Panc1 (cell line): ENCODE measurements at regions of chr12 and their contacts with region 1.

Region 1: GRCh38 chr12:102169922-102170621 is 27.6 kb downstream of the PMCH start:
- DNase-seq: peak; percentile 24
- ATAC-seq: peak; percentile 75; the same call in 1 of the 2 replicates
- H3K4me3 ChIP-seq: no peak overlapping the region
- H3K27ac ChIP-seq: no peak overlapping the region
- H3K4me1 ChIP-seq: no peaks in the 10 kb centered on the region
- H3K27me3 ChIP-seq: no peaks in the 10 kb centered on the region
- CTCF ChIP-seq: peak; percentile 77; the same call in 1 of the 2 replicates

Region 2: DNA sequence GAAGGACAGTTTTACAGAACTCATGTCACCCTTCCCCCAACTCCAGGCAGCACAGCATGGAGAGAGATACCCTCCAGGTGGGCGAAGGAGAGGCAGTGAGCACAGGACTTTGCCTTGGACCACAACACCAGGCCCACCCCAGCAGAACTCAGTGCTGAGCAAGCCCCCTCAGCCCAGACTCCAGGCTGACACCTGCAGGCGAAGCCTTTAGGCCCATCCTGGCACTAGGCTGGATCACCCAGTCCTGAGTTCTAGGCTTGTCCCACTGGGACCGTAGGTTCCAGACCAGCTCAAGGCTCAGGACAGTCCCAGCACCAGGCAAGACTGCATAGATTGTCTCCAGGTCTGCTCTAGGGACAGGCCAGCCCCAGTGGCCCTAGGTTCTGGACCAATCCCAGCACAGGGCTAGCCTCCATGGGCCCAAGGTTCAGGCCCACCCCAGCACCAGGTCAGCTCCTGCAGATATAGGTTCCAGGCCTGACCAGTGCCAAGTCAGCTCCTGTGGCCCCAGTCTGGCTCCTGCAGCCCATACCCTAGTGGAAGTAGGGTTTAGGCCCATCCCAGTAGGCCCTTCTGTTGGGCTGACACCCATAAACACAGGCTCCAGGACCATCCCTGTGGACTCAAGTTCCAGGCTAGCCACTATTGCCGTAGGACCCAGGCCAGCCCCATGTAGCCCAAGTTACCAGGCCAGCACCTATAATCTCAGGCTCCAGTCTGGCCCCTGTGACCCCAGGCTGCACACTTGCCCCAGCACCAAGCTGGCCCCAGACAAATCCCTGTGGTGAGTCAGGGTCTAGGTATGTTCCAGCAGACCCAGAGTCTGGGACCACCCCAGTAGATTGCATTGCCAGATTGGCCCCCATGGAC is 117.6 kb before region 1 on chr12:
- CTCF ChIA-PET with region 1: no interaction called
- POLR2A ChIA-PET with region 1: no interaction called
- in situ Hi-C with region 1: no loop called
- intact Hi-C with region 1: no loop called
- DNase-seq: no peak
- ATAC-seq: no peak
- H3K4me3 ChIP-seq: no peak overlapping the region
- H3K27ac ChIP-seq: no peak overlapping the region
- H3K4me1 ChIP-seq: no peaks in the 10 kb centered on the region
- H3K27me3 ChIP-seq: no peaks in the 10 kb centered on the region
- CTCF ChIP-seq: no peak

Region 3: GRCh38 chr12:102249077-102249841 is 79.2 kb after region 1 on chr12:
- CTCF ChIA-PET with region 1: no interaction called
- POLR2A ChIA-PET with region 1: no interaction called
- in situ Hi-C with region 1: no loop called
- intact Hi-C with region 1: no loop called
- DNase-seq: no peak
- ATAC-seq: no peak
- H3K4me3 ChIP-seq: no peak overlapping the region
- H3K27ac ChIP-seq: no peak overlapping the region
- H3K4me1 ChIP-seq: no peaks in the 10 kb centered on the region
- H3K27me3 ChIP-seq: no peaks in the 10 kb centered on the region
- CTCF ChIP-seq: no peak

Region 4: DNA sequence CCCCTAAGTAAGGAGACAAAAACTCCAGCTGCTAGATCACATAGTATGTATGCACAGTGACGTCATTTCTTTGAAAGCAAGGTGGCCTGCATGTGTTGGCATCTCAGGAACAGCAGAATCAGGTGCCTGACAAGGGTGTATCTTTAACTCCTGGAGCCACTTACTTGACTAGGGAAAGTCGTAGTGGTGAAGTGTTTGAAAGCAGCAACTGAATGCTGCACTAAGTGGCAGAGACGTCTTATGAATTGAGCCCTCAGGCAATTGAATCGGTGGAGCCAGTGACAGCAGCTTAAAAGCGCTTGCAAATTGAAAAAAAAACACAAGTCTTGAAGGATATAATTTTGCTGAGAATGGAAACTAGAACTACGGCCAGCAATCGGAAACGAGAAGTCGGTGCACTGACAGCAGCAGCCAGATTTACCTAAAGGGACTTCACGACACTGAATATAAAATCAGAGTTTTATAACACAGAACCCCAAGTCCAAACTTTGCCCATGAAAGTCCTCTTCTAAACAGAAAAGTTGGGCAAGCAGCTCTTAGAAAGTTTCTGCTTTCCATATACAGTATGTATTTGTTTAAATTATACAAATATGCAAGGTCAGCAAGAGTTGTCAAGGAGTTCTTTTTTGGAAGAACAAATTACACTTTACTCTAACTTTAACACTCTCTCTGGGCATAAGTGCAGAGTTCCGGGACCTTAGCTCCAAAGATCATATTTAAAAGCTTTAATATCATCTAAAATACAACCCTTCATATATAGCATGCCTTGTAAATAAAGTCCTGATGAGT is 309.2 kb after region 1 on chr12:
- CTCF ChIA-PET with region 1: interaction called, 3 read pairs
- POLR2A ChIA-PET with region 1: no interaction called
- in situ Hi-C with region 1: no loop called
- intact Hi-C with region 1: loop called (anchors 10 kb)
- DNase-seq: no peak
- ATAC-seq: no peak
- H3K4me3 ChIP-seq: no peak overlapping the region
- H3K27ac ChIP-seq: no peak overlapping the region
- H3K4me1 ChIP-seq: no peaks in the 10 kb centered on the region
- H3K27me3 ChIP-seq: no peaks in the 10 kb centered on the region
- CTCF ChIP-seq: no peak

Region 5: GRCh38 chr12:103645202-103645601 is 1475.1 kb after region 1 on chr12:
- CTCF ChIA-PET with region 1: no interaction called
- POLR2A ChIA-PET with region 1: no interaction called
- in situ Hi-C with region 1: no loop called
- intact Hi-C with region 1: no loop called
- DNase-seq: no peak
- ATAC-seq: no peak
- H3K4me3 ChIP-seq: no peak overlapping the region
- H3K27ac ChIP-seq: no peak overlapping the region
- H3K4me1 ChIP-seq: no peaks in the 10 kb centered on the region
- H3K27me3 ChIP-seq: no peaks in the 10 kb centered on the region
- CTCF ChIP-seq: no peak